ENCODE measurements at regions of chr11 and their contacts with region 1.

Region 1: GRCh38 chr11:31641477-31642062 is 132.0 kb downstream of the ELP4 start:
- DNase-seq: peak; percentile 22 to 37
- H3K4me3 ChIP-seq: no peak overlapping the region
- H3K27ac ChIP-seq: no peak overlapping the region
- H3K4me1 ChIP-seq: peaks cover 8% of the 10 kb centered on the region; the same call in 1 of the 2 replicates
- H3K27me3 ChIP-seq: no peaks in the 10 kb centered on the region
- CTCF ChIP-seq: peak; percentile 87

Region 2: DNA sequence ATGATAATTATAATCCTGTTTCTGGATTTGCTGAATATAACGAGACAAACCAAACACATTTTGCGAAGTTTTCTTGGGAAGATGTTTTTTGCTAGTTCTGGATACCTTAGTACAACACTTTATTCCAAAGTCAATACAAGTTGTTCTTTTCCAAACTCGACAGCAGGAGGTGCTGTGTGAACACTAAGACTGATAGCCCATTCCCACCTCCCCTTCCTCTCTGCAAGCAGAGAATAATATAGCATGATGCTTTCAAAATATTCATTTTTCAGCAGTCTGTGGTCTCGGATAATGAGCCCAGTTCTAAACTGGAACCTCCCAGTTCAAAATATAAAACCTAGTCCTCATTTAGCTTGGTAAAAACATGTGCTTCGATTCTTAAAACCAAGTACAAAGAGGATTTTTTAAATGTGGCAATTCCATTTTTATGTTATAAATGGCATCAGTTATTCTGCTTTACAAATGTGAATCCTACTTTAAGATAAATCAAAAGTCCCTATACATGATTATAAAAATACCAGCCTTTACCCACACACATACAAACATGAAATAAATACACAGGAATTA is 401.1 kb before region 1 on chr11:
- CTCF ChIA-PET with region 1: interaction called, 6 read pairs
- POLR2A ChIA-PET with region 1: no interaction called
- intact Hi-C with region 1: loop called (anchors 5 kb)
- DNase-seq: peak; percentile 18 to 46
- H3K4me3 ChIP-seq: no peak overlapping the region
- H3K27ac ChIP-seq: no peak overlapping the region
- H3K4me1 ChIP-seq: no peaks in the 10 kb centered on the region
- H3K27me3 ChIP-seq: no peaks in the 10 kb centered on the region
- CTCF ChIP-seq: peak; percentile 84

Region 3: DNA sequence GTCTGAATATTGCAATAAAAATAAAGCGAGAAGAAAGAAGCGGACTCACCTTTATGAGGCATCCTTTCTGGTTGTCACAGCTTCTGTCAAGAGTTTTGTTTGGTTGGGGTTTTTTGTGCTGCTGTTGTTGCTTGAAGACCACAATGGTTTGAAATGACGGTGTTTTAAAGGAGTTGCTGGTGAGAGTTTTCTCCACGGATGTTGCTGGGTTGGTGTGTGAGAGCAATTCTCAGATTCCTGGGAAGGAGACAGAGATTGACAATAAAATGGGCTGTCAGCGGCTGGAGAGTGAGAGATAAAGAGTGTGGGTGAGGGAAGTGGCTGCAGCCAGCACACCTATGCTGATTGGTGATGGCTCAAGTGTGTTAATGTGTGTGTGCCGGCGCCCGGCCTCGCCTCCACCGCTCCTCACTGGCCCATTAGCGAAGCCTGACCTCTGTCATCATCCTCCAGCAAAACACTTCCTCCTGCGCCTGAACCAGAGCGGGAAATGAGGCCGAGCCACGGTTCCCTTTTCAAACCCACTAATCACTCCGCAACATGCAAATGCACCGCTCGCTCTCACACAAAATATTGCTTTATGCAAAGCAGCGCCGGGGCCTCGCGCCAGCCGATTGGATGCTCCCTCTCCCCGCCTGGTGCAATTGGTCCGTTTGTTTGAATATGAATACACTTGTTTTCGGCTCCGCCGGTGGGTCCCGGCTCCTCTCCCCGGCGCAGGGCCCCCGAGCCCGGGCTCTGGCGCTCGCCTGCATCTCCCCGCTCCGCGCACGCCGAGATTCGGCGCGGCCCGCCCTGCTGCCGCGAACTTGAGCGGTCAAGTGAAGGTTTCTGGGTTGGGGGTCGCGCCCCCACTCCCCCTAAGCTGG is 169.4 kb after region 1 on chr11 and contains the start of gene PAX6:
- CTCF ChIA-PET with region 1: no interaction called
- POLR2A ChIA-PET with region 1: no interaction called
- intact Hi-C with region 1: loop called (anchors 2 kb)
- DNase-seq: peak; percentile 95 to 98
- H3K4me3 ChIP-seq: peak within 1 kb of the TSS; percentile 89
- H3K27ac ChIP-seq: peak within 1 kb of the TSS; percentile 77
- H3K4me1 ChIP-seq: peaks cover 28% of the 10 kb centered on the region
- H3K27me3 ChIP-seq: no peaks in the 10 kb centered on the region
- CTCF ChIP-seq: 0 out of 2 replicates have a peak, but pooled peaks have one; percentile 16
- total RNA-seq, gene PAX6: 19.8 and 29.0 TPM in 2 replicates

Region 4: DNA sequence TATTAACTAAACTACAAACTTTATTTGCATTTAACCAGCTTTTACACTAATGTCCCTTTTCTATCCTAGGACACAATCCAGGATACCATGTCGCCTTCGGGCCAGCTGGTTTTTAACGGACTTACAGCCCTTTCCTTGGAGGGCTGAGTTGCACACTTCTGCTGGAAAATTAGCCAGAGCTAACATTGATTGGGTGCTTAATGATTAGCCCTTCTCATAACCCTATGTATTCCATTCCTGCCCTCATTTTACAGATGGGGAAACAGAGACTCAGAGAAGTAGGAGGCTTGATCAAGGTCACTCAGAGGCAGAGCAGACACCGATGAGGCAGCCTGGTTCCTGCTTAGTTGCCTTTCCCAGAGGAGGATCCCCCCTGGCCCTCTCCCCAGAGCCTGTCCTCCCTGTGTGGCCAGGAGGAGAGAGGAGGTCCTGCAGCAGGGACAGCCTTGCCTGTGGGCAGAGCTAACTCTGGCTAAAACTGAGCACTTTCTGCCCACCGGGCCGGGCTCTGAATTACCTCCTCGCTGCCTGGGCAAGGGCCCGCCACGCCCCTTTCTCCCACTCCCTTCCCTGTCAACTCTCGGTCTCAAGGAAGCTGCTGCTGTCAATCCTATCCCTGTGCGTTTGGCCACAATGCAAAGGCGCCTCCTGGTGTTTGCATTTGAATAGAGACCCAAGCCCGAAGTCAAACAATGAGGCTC is 229.2 kb after region 1 on chr11:
- CTCF ChIA-PET with region 1: interaction called, 6 read pairs
- POLR2A ChIA-PET with region 1: no interaction called
- intact Hi-C with region 1: loop called (anchors 1 kb)
- DNase-seq: peak; percentile 48 to 50
- H3K4me3 ChIP-seq: no peak overlapping the region
- H3K27ac ChIP-seq: peak overlapping the region; percentile 93
- H3K4me1 ChIP-seq: peaks cover 84% of the 10 kb centered on the region
- H3K27me3 ChIP-seq: no peaks in the 10 kb centered on the region
- CTCF ChIP-seq: peak; percentile 71

Region 5: GRCh38 chr11:31958076-31958735 is 316.6 kb after region 1 on chr11:
- CTCF ChIA-PET with region 1: no interaction called
- POLR2A ChIA-PET with region 1: no interaction called
- intact Hi-C with region 1: loop called (anchors 1 kb)
- DNase-seq: peak; percentile 61 to 70
- H3K4me3 ChIP-seq: no peak overlapping the region
- H3K27ac ChIP-seq: no peak overlapping the region
- H3K4me1 ChIP-seq: peaks cover 16% of the 10 kb centered on the region
- H3K27me3 ChIP-seq: no peaks in the 10 kb centered on the region
- CTCF ChIP-seq: peak; percentile 97

Region 6: GRCh38 chr11:32006799-32007388 is 365.3 kb after region 1 on chr11:
- CTCF ChIA-PET with region 1: no interaction called
- POLR2A ChIA-PET with region 1: no interaction called
- intact Hi-C with region 1: loop called (anchors 2 kb)
- DNase-seq: peak; percentile 25 to 45
- H3K4me3 ChIP-seq: no peak overlapping the region
- H3K27ac ChIP-seq: no peak overlapping the region
- H3K4me1 ChIP-seq: no peaks in the 10 kb centered on the region
- H3K27me3 ChIP-seq: peaks cover 30% of the 10 kb centered on the region
- CTCF ChIP-seq: peak; percentile 82

Measured in PC-9 (cell line).